ENCODE measurements at regions of chr15 and their contacts with region 1.

Region 1: GRCh38 chr15:40038638-40039543 is at the start of gene SRP14:
- DNase-seq: peak; percentile 63
- ATAC-seq: peak; percentile 99
- H3K4me3 ChIP-seq: peak within 1 kb of the TSS; percentile 76 to 96
- H3K27ac ChIP-seq: peak within 1 kb of the TSS; percentile 99
- H3K4me1 ChIP-seq: peaks cover 6% of the 10 kb centered on the region
- H3K27me3 ChIP-seq: no peaks in the 10 kb centered on the region
- CTCF ChIP-seq: no peak
- total RNA-seq, gene SRP14: 166 TPM

Region 2: DNA sequence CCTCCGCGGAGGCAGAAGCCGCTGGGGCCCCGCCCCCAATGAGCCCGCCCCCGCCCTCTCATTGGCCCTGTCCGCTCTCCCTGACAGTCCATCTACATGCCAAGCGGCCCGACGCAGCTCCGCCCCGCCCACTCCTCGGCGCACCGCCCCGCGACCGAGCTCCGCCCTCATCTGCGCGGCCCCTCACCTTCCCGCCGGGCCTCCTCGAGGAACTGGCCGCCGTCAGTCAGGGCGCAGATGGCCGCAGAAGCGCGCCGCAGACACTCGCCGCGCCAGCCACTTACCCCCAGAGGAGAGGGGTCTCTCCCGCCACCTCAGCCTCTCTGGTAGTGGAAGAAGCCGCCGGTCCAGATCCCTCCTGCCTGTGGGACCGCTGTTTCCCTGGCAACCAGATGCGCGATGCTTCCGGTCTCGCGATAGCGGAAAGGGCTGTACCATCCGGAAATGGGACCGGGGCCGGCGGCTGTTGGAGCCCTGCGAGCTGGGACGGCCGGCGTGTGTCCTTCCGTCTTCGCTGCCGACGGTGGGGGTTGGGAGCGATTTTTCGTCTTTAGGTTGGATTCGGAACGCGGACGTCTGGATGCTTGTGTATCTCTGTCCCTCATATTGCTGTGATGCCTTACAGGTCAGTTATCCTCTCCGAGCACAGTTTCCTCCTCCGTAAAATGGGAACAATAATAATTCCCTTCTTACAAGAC is 256.3 kb before region 1 on chr15 and contains the start of gene FSIP1:
- CTCF ChIA-PET with region 1: no interaction called
- POLR2A ChIA-PET with region 1: no interaction called
- in situ Hi-C with region 1: no loop called
- intact Hi-C with region 1: loop called (anchors 10 kb)
- DNase-seq: peak; percentile 89
- ATAC-seq: peak; percentile 99
- H3K4me3 ChIP-seq: peak within 1 kb of the TSS; percentile 63 to 93
- H3K27ac ChIP-seq: peak within 1 kb of the TSS; percentile 85
- H3K4me1 ChIP-seq: peaks cover 37% of the 10 kb centered on the region
- H3K27me3 ChIP-seq: no peaks in the 10 kb centered on the region
- CTCF ChIP-seq: no peak
- total RNA-seq, gene FSIP1: 1.4 TPM

Region 3: DNA sequence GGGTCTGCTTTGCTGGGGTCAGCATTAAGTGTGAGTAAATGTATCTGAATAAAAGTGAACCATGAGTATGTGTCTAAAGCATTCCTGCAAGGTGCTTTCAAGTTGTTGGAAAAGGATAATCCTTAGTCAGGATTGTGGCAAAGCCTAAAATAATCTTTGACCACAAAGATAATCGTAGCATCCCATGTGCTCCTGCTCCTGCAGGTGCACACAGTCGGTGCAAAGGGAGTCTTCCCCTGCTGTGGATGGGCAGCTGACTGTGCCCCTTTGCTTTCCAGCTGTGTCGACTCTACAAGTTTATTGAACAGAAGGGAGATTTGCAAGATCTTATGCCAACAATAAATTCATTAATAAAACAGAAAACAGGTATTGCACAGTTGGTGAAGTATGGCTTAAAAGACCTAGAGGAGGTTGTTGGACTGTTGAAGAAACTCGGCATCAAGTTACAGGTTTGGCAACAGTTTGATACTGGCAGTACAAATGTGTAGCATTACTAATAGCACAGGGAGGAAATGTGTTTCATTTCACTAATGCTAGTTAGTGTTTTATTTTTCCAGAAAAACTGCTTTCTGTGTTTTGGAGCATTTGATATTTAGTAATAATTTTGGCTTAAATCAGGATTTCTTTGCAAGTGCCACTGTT is 22.5 kb before region 1 on chr15:
- CTCF ChIA-PET with region 1: no interaction called
- POLR2A ChIA-PET with region 1: no interaction called
- in situ Hi-C with region 1: no loop called
- intact Hi-C with region 1: no loop called
- DNase-seq: no peak
- ATAC-seq: no peak
- H3K4me3 ChIP-seq: no peak overlapping the region
- H3K27ac ChIP-seq: no peak overlapping the region
- H3K4me1 ChIP-seq: no peaks in the 10 kb centered on the region
- H3K27me3 ChIP-seq: no peaks in the 10 kb centered on the region
- CTCF ChIP-seq: no peak

Region 4: DNA sequence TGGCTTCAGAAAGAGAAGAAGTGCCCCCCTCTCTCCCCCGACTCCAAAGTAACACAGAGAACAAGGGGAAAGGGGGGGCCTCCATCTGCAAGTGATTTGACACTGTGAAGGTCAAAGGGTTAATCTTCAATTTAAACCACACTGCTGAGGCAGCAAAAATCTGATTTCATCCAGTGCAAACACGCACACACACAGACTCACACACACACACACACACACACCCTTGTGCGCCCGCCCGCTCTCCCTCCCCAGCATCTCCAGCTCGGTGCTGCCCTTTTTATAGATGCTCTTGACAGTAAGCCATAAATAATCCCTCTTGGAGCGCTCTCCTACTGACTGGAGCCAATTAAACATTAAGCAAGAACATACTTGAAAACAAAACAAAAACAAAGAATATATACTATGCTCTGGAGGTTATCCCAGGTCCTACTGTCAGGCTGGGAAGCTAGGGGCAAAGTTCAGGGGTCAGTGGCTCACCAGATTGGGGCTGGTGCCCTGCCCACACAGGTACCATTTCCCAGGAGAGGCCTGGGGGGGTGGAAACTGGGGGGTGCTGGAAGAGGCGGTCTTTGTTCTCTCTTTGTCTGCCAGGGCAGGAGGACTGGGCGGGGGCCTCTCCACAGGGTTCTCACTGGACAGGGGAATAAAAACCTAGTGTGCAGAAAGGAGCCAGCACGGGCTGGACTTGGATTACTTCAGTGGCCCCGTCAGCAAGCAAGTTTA is 53.5 kb after region 1 on chr15:
- CTCF ChIA-PET with region 1: no interaction called
- POLR2A ChIA-PET with region 1: no interaction called
- in situ Hi-C with region 1: no loop called
- intact Hi-C with region 1: no loop called
- DNase-seq: no peak
- ATAC-seq: no peak
- H3K4me3 ChIP-seq: no peak overlapping the region
- H3K27ac ChIP-seq: no peak overlapping the region; the same call in 1 of the 2 replicates
- H3K4me1 ChIP-seq: peaks cover 39% of the 10 kb centered on the region
- H3K27me3 ChIP-seq: no peaks in the 10 kb centered on the region
- CTCF ChIP-seq: no peak

Measured in Panc1 (cell line).